Naive thymus-derived CD8-positive, alpha-beta T cell (primary cell): ENCODE measurements at regions of chr17 and their contacts with region 1.

Region 1: GRCh38 chr17:49788478-49789242 is at the start of gene KAT7:
- DNase-seq: peak; percentile 94 to 99 (median 99)
- ATAC-seq: peak; percentile 84 to 85
- H3K4me3 Mint-ChIP-seq: peak within 1 kb of the TSS; percentile 90 to 99 (median 97)
- H3K27ac Mint-ChIP-seq: peak within 1 kb of the TSS; percentile 94 to 100 (median 98)
- H3K4me1 Mint-ChIP-seq: peaks cover 18 to 63% (median 53%) of the 10 kb centered on the region in 4 donors
- H3K27me3 Mint-ChIP-seq: no peaks in the 10 kb centered on the region
- polyA plus RNA-seq, gene KAT7: 34.4 to 51.1 (median 39.2) TPM

Region 2: DNA sequence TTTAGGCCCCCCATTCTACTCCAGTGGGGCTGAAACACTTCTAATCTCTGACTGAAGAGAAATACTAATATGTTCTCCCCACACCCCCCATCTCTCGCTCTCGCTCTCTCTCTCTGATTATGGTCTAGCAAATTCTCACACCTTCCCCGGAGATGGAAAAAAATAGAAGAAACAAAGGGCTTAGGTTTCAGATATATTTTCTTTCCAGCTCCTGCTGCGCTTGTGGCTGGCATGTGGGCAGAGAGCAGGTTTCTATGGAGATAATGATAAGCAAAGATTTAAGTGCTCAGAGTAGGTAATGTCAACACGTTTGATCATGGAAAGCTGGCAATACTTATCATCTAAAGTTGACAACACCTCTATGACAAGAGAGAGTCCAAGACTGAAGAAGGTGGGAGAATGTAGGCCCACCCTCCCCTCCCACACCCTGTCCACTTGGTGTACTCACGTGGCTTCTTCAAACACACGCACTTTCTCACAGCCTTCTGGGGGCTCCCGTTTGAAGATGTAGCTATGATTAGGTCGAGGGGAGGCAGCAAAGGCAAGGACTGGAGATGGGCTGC is 72.9 kb before region 1 on chr17:
- POLR2A ChIA-PET with region 1: no interaction called
- DNase-seq: peak in 4 of 10 donors; percentile 14 to 62 (median 26)
- ATAC-seq: peak; percentile 59 to 70
- H3K4me3 Mint-ChIP-seq: peak overlapping the region in 7 of 10 donors; percentile 11 to 80 (median 48)
- H3K27ac Mint-ChIP-seq: peak overlapping the region; percentile 77 to 97 (median 88)
- H3K4me1 Mint-ChIP-seq: peaks cover 6 to 43% (median 18%) of the 10 kb centered on the region in 4 donors
- H3K27me3 Mint-ChIP-seq: no peaks in the 10 kb centered on the region

Region 3: GRCh38 chr17:49739641-49740271 is 48.9 kb before region 1 on chr17:
- POLR2A ChIA-PET with region 1: interaction called, 54 read pairs
- DNase-seq: peak; percentile 93 to 99 (median 96)
- ATAC-seq: peak; percentile 95 to 98
- H3K4me3 Mint-ChIP-seq: peak overlapping the region; percentile 82 to 97 (median 91)
- H3K27ac Mint-ChIP-seq: peak overlapping the region; percentile 97 to 100 (median 100)
- H3K4me1 Mint-ChIP-seq: peaks cover 51 to 98% (median 86%) of the 10 kb centered on the region in 4 donors
- H3K27me3 Mint-ChIP-seq: no peaks in the 10 kb centered on the region

Region 4: DNA sequence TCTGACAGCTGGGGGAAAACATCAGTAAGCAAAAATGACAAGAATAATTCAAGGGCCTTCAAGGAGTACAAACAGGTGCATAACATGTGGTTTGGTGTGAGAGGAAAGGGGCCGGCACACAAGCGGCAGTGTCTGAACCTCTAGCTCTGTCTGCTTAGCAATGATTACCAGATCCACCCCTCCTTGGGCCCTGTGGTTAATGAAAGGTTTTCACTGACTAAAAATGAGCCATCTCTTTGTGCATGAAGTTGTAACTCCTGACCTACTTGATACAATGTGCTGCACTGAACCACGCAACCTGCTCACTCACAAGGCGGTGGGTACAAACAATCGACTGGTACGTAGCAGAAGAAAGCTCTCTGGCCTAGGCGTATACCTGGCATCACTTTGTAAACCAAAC is 39.9 kb before region 1 on chr17:
- POLR2A ChIA-PET with region 1: interaction called, 26 read pairs
- DNase-seq: peak in 9 of 10 donors; percentile 34 to 64 (median 53)
- ATAC-seq: peak; percentile 67 to 78
- H3K4me3 Mint-ChIP-seq: peak overlapping the region; percentile 56 to 89 (median 81)
- H3K27ac Mint-ChIP-seq: peak overlapping the region; percentile 94 to 100 (median 96)
- H3K4me1 Mint-ChIP-seq: peaks cover 50 to 96% (median 80%) of the 10 kb centered on the region in 4 donors
- H3K27me3 Mint-ChIP-seq: no peaks in the 10 kb centered on the region

Region 5: DNA sequence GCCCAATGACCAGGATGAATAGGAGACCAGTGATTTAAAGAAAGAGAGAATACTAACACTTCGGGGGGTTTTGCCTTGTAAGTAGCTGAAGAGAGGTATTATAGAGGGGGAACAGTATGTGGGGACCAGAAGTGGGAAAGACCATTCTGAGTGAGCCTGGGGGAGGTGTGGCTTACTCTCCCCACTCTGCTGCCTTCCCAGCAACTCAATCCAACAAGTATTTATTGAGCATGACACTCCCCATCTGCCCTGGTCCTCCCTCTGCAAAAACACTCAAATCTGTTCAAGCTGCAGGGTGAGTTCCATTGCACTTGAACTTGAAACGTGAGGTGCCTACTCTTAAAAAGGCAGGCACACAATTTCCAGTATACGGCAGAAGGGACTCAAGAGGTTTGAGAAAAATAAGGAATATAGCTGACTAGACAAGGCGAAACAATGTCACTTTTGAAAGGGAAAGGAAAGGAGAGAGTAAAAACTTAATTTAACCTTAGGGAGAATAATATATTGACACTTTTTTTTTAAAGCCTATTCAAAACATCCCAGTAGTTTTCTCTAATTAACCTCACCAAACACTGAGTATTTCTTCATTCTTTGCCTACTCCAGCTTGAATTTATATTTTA is 32.9 kb before region 1 on chr17:
- POLR2A ChIA-PET with region 1: interaction called, 11 read pairs
- DNase-seq: no peak
- ATAC-seq: no peak
- H3K4me3 Mint-ChIP-seq: peak overlapping the region in 8 of 10 donors; percentile 32 to 70 (median 48)
- H3K27ac Mint-ChIP-seq: peak overlapping the region; percentile 81 to 93 (median 86)
- H3K4me1 Mint-ChIP-seq: peaks cover 32 to 88% (median 84%) of the 10 kb centered on the region in 4 donors
- H3K27me3 Mint-ChIP-seq: no peaks in the 10 kb centered on the region

Region 6: DNA sequence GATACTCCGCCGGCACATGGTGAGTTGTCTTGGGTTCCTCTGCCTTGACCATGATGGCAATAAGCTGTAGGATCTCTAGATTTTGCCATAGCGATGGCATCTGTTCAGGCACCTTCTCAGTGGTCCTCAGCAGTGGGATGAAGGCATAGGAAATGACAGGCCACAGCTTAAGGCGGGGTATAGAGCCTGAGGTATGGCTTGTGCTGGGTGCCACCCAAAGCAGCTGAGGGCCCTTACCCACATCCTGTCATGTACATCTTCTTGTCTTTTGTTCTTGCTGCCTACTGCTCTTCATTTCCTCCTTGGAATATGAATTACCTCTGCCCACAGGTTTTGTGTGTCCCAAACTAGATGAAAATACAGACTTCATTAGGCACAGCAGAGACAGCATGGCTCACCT is 29.3 kb after region 1 on chr17:
- POLR2A ChIA-PET with region 1: interaction called, 18 read pairs
- DNase-seq: peak; percentile 23 to 84 (median 70)
- ATAC-seq: peak; percentile 98 to 100
- H3K4me3 Mint-ChIP-seq: peak overlapping the region; percentile 58 to 90 (median 82)
- H3K27ac Mint-ChIP-seq: peak overlapping the region; percentile 84 to 99 (median 98)
- H3K4me1 Mint-ChIP-seq: peaks cover 34 to 86% (median 82%) of the 10 kb centered on the region in 4 donors
- H3K27me3 Mint-ChIP-seq: no peaks in the 10 kb centered on the region